ENCODE measurements at regions of chr9 and their contacts with region 1.

Region 1: GRCh38 chr9:129726322-129727160 is 26.3 kb downstream of the PTGES start:
- DNase-seq: peak; percentile 97
- H3K4me3 ChIP-seq: no peak overlapping the region
- H3K27ac ChIP-seq: 0 out of 4 replicates have a peak overlapping the region, but pooled peaks of 1 of the 2 experiments have one; percentile 30
- H3K4me1 ChIP-seq: peaks cover 0 to 7% of the 10 kb centered on the region in 2 experiments; a peak in 1 of 4 replicates
- H3K27me3 ChIP-seq: 0 out of 2 replicates have a peak, but pooled peaks cover 3% of the 10 kb centered on the region
- CTCF ChIP-seq: peak; percentile 89
- EP300 ChIP-seq: no peak
- RAD21 ChIP-seq: peak; percentile 72

Region 2: GRCh38 chr9:129549139-129549538 is 177.4 kb before region 1 on chr9:
- CTCF ChIA-PET with region 1: no interaction called
- POLR2A ChIA-PET with region 1: no interaction called
- DNase-seq: no peak
- H3K4me3 ChIP-seq: no peak overlapping the region
- H3K27ac ChIP-seq: no peak overlapping the region
- H3K4me1 ChIP-seq: peaks cover 3 to 9% of the 10 kb centered on the region in 2 experiments; a peak in 1 of 4 replicates
- H3K27me3 ChIP-seq: no peaks in the 10 kb centered on the region
- CTCF ChIP-seq: no peak
- EP300 ChIP-seq: no peak
- RAD21 ChIP-seq: no peak

Region 3: DNA sequence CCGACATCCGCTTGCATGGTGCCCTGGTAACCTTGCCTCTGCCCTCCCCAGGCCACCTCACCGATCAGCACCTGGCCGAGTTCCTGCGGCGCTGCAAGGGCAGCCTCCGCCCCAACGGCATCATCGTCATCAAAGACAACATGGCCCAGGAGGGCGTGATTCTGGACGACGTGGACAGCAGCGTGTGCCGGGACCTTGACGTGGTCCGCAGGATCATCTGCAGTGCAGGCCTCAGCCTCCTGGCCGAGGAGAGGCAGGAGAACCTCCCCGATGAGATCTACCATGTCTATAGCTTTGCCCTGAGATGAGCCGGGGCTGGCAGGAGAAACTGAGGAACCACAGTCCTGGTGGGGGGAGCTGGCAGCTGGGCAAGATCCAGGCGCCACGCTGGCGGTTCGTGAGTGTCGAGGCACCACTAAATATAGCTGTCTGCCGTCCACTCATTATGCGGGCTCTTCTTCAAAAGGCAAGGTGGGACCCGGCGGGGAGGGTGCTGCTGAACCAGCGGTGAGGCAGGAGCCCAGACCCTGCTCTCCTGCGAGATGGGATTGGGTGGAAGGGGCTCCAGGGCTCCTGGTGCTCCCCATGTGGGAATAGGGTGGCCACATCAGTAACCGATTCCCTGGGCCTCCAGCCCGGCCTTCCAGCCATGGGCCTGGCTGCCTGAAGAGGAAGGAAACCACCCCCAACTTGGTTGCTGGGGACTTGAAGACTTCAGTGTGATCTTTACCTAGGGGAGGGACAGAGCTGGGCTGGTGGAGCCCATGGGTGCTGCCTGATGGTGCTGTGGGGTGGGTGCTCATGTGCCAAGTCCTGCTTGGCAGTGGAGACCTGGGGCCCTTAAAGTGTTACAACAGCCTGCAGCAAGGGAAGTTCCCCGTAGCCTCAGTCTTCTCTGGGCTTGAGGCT is 91.1 kb before region 1 on chr9:
- CTCF ChIA-PET with region 1: interaction called, 73 read pairs
- POLR2A ChIA-PET with region 1: interaction called, 4 read pairs
- DNase-seq: no peak
- H3K4me3 ChIP-seq: no peak overlapping the region
- H3K27ac ChIP-seq: no peak overlapping the region
- H3K4me1 ChIP-seq: peaks cover 21 to 37% of the 10 kb centered on the region in 2 experiments
- H3K27me3 ChIP-seq: no peaks in the 10 kb centered on the region
- CTCF ChIP-seq: no peak
- EP300 ChIP-seq: no peak
- RAD21 ChIP-seq: no peak

Region 4: DNA sequence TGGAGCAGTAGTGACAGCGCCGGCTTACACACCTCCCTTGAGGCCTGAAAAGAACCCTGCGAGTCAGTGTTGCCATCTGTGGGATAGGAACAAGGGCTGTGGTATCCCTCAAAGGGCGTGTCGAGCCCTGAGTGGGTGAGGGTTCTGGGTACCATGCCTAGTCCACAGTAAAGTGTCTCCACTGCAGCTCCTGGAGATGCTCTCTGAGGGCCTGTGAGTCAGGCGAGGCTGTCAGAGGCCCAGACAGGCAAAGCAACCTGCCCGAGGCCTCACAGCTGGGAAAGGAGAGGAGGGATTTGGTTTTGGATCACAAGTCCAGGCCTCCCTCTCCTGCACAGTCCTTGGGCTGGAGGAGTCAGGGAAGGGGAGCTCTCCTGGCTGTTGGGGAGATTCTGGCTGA is 55.0 kb before region 1 on chr9:
- CTCF ChIA-PET with region 1: interaction called, 36 read pairs
- POLR2A ChIA-PET with region 1: no interaction called
- DNase-seq: no peak
- H3K4me3 ChIP-seq: no peak overlapping the region
- H3K27ac ChIP-seq: no peak overlapping the region
- H3K4me1 ChIP-seq: peaks cover 0 to 42% of the 10 kb centered on the region in 2 experiments; a peak in 1 of 4 replicates
- H3K27me3 ChIP-seq: peaks cover 7% of the 10 kb centered on the region; the same call in 1 of the 2 replicates
- CTCF ChIP-seq: no peak
- EP300 ChIP-seq: no peak
- RAD21 ChIP-seq: no peak

Region 5: DNA sequence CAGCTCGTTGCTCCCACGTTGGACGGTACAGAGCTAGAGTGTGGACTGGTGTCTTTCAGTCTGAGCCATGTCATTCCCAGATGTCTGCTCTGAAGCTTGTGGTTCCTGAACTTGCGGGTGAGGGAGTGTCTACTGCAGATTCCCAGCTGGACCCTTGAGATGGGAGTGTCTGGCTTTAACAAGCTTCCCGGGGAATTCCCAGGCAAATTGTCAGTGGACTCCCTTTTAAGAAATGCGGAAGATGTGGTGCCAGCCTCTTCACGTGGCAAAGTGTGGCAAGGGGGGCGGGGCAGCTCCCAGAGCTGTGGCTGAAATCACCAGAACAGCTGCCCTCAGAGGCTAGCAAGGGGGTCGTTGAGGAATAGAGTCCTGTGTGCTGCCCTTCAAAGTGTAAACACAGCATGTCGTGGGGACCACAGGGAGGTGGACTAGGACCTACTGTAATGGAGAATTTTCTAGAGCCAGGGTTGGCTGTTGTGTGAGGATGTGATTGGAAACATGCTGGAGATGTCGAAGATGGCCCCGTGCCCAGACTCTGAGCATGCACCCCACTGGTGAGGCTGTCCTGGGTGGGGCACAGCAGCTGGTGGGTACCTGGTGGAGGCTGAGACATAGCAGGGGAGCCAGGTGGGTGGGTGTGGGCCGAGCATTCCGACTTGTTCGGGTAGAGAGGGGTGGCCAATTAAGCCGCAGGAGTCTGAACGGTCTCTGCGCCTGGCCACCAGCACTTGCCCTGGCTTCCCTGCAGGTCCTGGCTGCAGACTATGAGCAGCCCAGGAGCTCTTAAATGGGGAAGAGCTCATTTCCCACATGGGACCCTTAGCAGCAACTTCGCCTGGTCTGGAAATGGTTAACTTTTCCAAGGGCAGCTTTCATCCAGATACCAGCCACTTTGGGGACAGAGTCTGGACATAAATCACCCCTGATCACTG is 23.7 kb before region 1 on chr9:
- CTCF ChIA-PET with region 1: interaction called, 31 read pairs
- POLR2A ChIA-PET with region 1: no interaction called
- DNase-seq: no peak
- H3K4me3 ChIP-seq: no peak overlapping the region
- H3K27ac ChIP-seq: no peak overlapping the region
- H3K4me1 ChIP-seq: peaks cover 0 to 36% of the 10 kb centered on the region in 2 experiments; a peak in 2 of 4 replicates
- H3K27me3 ChIP-seq: no peaks in the 10 kb centered on the region
- CTCF ChIP-seq: no peak
- EP300 ChIP-seq: no peak
- RAD21 ChIP-seq: no peak

Region 6: DNA sequence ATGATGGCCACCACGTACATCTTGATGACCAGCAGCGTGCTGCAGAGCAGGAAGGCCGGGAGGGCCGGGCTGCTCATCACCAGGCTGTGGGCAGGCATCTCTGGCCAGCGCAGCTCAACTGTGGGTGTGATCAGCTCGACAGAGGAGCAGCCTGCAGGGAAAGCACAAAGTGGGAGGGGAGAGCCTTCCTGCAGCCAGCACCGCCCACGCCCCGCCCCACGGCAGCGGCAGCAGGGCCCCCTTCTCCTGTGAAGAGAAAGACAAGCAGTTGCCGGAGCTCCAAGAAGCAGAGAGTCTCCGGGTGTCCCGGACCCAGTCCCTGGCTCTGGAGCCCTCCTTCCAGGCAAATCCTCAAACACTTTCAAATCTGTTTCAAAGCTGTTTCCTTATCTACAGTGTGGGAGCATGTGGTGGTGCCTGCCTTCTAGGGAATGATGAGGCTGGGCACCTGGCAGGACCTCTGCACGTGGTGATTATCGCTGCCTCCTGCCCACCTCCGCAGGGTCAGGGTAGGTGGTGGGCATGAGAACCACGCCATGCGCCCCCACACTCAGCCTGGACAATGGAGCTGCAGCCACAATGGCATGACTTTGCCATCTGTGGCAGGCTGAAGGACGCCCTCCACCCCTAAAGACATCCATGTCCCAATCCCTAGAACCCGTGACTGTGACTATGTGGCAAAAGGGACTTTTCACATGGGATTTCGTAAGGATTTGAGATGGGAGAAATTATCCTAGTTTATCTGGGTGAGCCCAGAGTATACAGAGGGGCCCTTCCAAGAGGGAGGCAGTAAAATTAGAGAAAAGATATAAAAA is 26.6 kb after region 1 on chr9 and contains the start of gene PTGES:
- CTCF ChIA-PET with region 1: interaction called, 13 read pairs
- POLR2A ChIA-PET with region 1: no interaction called
- DNase-seq: peak; percentile 86
- H3K4me3 ChIP-seq: peak within 1 kb of the TSS; percentile 28 to 29; a peak in 3 of 4 replicates
- H3K27ac ChIP-seq: no peak within 1 kb of the TSS; a peak in 1 of 4 replicates
- H3K4me1 ChIP-seq: peaks cover 5 to 20% of the 10 kb centered on the region in 2 experiments; a peak in 2 of 4 replicates
- H3K27me3 ChIP-seq: no peaks in the 10 kb centered on the region
- CTCF ChIP-seq: no peak
- EP300 ChIP-seq: no peak
- RAD21 ChIP-seq: no peak
- polyA plus RNA-seq, gene PTGES: 3.2 and 5.2 TPM in 2 replicates

Region 7: GRCh38 chr9:129783516-129784361 is 57.2 kb after region 1 on chr9:
- CTCF ChIA-PET with region 1: interaction called, 88 read pairs
- POLR2A ChIA-PET with region 1: no interaction called
- DNase-seq: peak; percentile 91
- H3K4me3 ChIP-seq: no peak overlapping the region
- H3K27ac ChIP-seq: no peak overlapping the region
- H3K4me1 ChIP-seq: no peaks in the 10 kb centered on the region
- H3K27me3 ChIP-seq: no peaks in the 10 kb centered on the region; the same call in 1 of the 2 replicates
- CTCF ChIP-seq: peak; percentile 93
- EP300 ChIP-seq: no peak
- RAD21 ChIP-seq: peak; percentile 99

Measured in SK-N-SH (cell line).